ENCODE measurements at regions of chr17 and their contacts with region 1.

Region 1: GRCh38 chr17:50944054-50944901 is 78.1 kb upstream of the TOB1 start:
- DNase-seq: peak; percentile 55 to 88 (median 80)
- ATAC-seq: peak; percentile 89
- H3K4me3 ChIP-seq: peak overlapping the region; percentile 65
- H3K4me3 Mint-ChIP-seq: peak overlapping the region; percentile 83
- H3K27ac ChIP-seq: peak overlapping the region; percentile 68 to 77
- H3K27ac Mint-ChIP-seq: peak overlapping the region; percentile 85
- H3K4me1 ChIP-seq: peaks cover 61% of the 10 kb centered on the region
- H3K4me1 Mint-ChIP-seq: peaks cover 52% of the 10 kb centered on the region
- H3K27me3 ChIP-seq: no peaks in the 10 kb centered on the region
- H3K27me3 Mint-ChIP-seq: no peaks in the 10 kb centered on the region
- CTCF ChIP-seq: no peak

Region 2: GRCh38 chr17:50904521-50905459 is 39.5 kb before region 1 on chr17:
- CTCF ChIA-PET with region 1: no interaction called
- POLR2A ChIA-PET with region 1: interaction called, 16 read pairs
- intact Hi-C with region 1: no loop called
- DNase-seq: no peak
- ATAC-seq: no peak
- H3K4me3 ChIP-seq: no peak overlapping the region
- H3K4me3 Mint-ChIP-seq: no peak overlapping the region
- H3K27ac ChIP-seq: peak overlapping the region in 1 of 2 donors; percentile 80
- H3K27ac Mint-ChIP-seq: peak overlapping the region; percentile 86
- H3K4me1 ChIP-seq: peaks cover 84% of the 10 kb centered on the region
- H3K4me1 Mint-ChIP-seq: peaks cover 66% of the 10 kb centered on the region
- H3K27me3 ChIP-seq: no peaks in the 10 kb centered on the region
- H3K27me3 Mint-ChIP-seq: no peaks in the 10 kb centered on the region
- CTCF ChIP-seq: no peak